ENCODE measurements at regions of chr6 and their contacts with region 1.

Region 1: GRCh38 chr6:122730775-122731386 is 48.6 kb upstream of the FABP7 start:
- DNase-seq: peak; percentile 12
- H3K4me3 ChIP-seq: no peak overlapping the region
- CTCF ChIP-seq: peak; percentile 46

Region 2: DNA sequence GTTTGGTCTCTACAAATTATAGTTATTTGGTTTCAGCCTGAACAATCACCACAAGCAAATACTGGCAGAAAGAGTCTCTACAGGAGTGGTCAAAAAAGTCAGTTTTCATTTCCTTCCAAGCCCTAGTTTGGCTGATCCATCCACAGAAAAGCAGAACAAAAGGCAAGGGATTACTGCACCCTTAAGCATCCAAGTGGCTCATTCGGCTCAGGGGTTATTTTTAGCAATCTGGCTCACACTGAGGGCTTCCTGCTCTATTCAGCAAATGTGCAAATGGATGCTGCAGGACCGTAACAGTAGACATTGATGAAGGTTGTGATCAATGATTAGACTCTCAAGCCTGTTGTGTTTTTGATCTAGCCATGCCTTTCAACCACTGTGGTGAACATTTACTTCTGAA is 13.5 kb before region 1 on chr6:
- CTCF ChIA-PET with region 1: interaction called, 31 read pairs
- POLR2A ChIA-PET with region 1: no interaction called
- DNase-seq: no peak
- H3K4me3 ChIP-seq: no peak overlapping the region
- CTCF ChIP-seq: no peak

Region 3: DNA sequence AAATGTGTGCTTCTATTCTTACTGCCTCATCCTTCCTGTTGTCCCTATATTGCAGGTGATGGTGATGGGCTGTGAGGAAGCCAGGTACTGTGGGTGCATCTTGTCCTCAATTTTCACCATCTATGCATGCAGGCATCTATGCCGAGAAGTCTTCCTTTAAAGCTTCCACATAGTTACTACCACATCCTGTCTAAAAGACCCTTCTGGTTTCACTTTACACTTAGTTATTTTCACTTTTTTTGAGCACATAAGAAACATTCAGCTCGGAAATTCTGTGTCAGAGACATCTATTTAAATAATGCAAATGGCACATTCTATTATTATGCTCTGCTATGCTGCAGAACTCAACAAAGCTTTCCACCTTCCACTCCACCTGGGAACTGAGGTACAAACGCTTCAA is 20.4 kb after region 1 on chr6:
- CTCF ChIA-PET with region 1: interaction called, 11 read pairs
- POLR2A ChIA-PET with region 1: no interaction called
- DNase-seq: no peak
- H3K4me3 ChIP-seq: no peak overlapping the region
- CTCF ChIP-seq: no peak

Region 4: GRCh38 chr6:122833021-122833491 is 102.2 kb after region 1 on chr6:
- CTCF ChIA-PET with region 1: interaction called, 292 read pairs
- POLR2A ChIA-PET with region 1: no interaction called
- DNase-seq: no peak
- H3K4me3 ChIP-seq: peak overlapping the region; percentile 19; the same call in 1 of the 2 replicates
- CTCF ChIP-seq: no peak

Measured in AG04449 (cell line).